CD4-positive, alpha-beta memory T cell (primary cell): ENCODE measurements at regions of chr6 and their contacts with region 1.

Region 1: DNA sequence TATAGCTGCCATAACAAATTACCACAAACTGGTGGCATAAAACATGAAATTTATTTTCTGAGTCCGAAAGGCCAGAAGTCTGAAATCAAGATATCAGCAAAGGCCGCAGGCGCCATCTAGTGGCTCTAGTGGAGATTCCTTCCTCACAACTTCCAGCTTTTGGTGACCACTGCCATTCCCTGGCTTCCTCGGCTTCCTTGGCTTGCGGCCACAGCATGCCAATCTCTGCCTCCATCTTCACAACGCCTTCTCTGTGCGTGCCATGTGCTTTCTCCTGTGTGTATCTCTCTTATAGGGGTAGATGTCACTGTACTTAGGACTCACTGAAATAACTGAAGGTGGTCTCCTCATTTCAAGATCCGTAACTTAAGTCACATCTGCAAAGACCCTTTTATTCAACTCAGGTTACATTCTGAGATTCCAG is 5.4 kb upstream of the PLAGL1 start:
- DNase-seq: peak; percentile 50 to 61 (median 56)
- H3K4me3 ChIP-seq: no peak overlapping the region
- H3K4me3 Mint-ChIP-seq: no peak overlapping the region
- H3K27ac ChIP-seq: no peak overlapping the region
- H3K27ac Mint-ChIP-seq: no peak overlapping the region
- H3K4me1 ChIP-seq: no peaks in the 10 kb centered on the region
- H3K4me1 Mint-ChIP-seq: peaks cover 0 to 2% (median under 1%) of the 10 kb centered on the region in 4 donors
- H3K27me3 ChIP-seq: no peaks in the 10 kb centered on the region
- H3K27me3 Mint-ChIP-seq: peaks cover 1 to 4% of the 10 kb centered on the region in 2 donors

Region 2: GRCh38 chr6:142566628-142567396 is 1446.7 kb before region 1 on chr6:
- CTCF ChIA-PET with region 1: no interaction called
- POLR2A ChIA-PET with region 1: no interaction called
- intact Hi-C with region 1: loop called (anchors 5 kb)
- DNase-seq: peak; percentile 47 to 49 (median 48)
- H3K4me3 ChIP-seq: no peak overlapping the region
- H3K4me3 Mint-ChIP-seq: peak overlapping the region in 2 of 8 donors; percentile 29 to 53
- H3K27ac ChIP-seq: no peak overlapping the region
- H3K27ac Mint-ChIP-seq: peak overlapping the region in 6 of 7 donors; percentile 24 to 64 (median 40)
- H3K4me1 ChIP-seq: peaks cover 52% of the 10 kb centered on the region
- H3K4me1 Mint-ChIP-seq: peaks cover 34 to 59% (median 51%) of the 10 kb centered on the region in 4 donors
- H3K27me3 ChIP-seq: no peaks in the 10 kb centered on the region
- H3K27me3 Mint-ChIP-seq: no peaks in the 10 kb centered on the region

Region 3: DNA sequence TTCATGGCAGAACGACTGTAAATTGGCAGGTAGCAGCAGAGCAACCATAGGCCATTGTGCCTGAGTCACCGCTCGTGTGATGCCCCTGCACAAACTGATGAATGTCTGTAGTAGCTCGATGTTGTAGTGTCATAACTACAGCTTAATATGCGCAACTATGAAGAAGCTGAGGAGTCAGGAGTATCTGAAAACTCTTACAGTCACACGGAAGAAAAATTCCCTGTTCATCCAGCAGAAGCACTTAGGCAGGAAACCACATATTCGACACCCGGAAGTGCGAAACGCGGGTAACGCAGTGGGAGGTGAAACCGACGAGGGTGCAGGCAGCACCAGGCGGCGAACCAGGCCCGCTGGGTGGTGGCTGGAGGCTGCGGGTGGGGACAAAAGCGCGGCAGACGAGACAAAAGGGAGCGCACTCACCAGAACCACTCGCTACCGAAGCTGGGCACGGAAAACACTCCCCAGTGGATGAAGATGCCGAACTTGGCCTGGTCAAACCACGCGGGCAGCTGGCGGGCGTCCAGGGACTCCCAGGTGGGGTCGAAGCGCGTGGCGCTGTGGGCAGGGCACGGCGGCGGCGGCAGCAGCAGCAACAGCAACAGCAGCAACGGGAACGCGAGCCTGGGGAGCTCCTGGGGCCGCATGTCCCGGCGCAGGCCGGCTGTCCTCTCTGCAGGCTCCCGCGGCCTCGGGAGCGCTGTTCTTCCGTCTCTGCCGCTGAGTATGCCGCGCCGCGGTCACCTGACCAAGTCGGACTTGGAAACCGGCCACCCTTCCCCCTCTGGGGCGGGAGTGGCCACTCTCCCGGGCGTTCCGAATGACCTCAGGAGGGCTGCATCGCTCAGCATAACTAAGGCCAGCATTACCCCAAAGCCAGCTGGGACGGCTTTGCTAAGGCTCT is 502.3 kb before region 1 on chr6 and contains the start of gene FUCA2:
- CTCF ChIA-PET with region 1: interaction called, 31 read pairs
- POLR2A ChIA-PET with region 1: interaction called, 3 read pairs
- intact Hi-C with region 1: loop called (anchors 1 kb)
- DNase-seq: peak; percentile 64 to 76 (median 70)
- H3K4me3 ChIP-seq: peak within 1 kb of the TSS; percentile 64 to 78
- H3K4me3 Mint-ChIP-seq: peak within 1 kb of the TSS; percentile 91 to 97 (median 92)
- H3K27ac ChIP-seq: peak within 1 kb of the TSS; percentile 67
- H3K27ac Mint-ChIP-seq: peak within 1 kb of the TSS; percentile 92 to 97 (median 94)
- H3K4me1 ChIP-seq: peaks cover 35% of the 10 kb centered on the region
- H3K4me1 Mint-ChIP-seq: peaks cover 20 to 45% (median 27%) of the 10 kb centered on the region in 4 donors
- H3K27me3 ChIP-seq: no peaks in the 10 kb centered on the region
- H3K27me3 Mint-ChIP-seq: no peaks in the 10 kb centered on the region
- total RNA-seq, gene FUCA2: 10.6 to 11.4 TPM

Region 4: GRCh38 chr6:143940011-143940597 is 73.4 kb before region 1 on chr6:
- CTCF ChIA-PET with region 1: interaction called, 44 read pairs
- POLR2A ChIA-PET with region 1: no interaction called
- intact Hi-C with region 1: loop called (anchors 1 kb)
- DNase-seq: peak; percentile 55 to 66 (median 58)
- H3K4me3 ChIP-seq: no peak overlapping the region
- H3K4me3 Mint-ChIP-seq: no peak overlapping the region
- H3K27ac ChIP-seq: no peak overlapping the region
- H3K27ac Mint-ChIP-seq: no peak overlapping the region
- H3K4me1 ChIP-seq: no peaks in the 10 kb centered on the region
- H3K4me1 Mint-ChIP-seq: peaks cover 4 to 7% (median 6%) of the 10 kb centered on the region in 4 donors
- H3K27me3 ChIP-seq: no peaks in the 10 kb centered on the region
- H3K27me3 Mint-ChIP-seq: peaks cover 4 to 5% of the 10 kb centered on the region in 2 donors

Region 5: DNA sequence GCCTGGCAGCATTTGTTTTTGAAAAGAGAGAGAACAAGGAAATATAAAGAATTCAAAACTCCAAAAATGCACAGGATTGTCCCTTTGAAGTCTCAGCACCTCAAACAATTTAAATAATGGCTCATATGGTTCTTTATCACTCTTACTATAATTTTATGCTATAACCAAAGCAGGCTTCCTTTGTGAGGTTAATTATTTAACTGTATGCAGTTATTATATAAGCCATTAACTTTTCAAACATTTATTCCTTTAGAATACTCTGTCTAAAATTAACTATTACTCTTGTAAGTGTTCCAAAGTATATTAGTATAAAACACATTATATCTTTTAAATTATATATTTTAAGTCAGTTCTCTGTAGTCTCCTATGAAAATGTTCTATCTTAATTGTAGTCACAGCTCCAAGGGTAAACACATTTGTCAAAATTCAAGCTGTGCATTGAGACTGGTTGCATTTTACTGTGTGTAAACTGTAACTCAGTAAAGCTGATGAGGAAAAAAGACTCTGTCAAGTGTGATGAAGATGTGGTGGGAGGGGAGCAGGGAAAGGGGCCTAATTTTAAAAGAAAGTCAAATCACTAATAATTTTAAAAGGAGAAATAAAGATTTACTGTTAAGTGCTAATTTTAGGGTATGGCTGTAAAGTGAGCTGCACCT is 14.6 kb after region 1 on chr6:
- CTCF ChIA-PET with region 1: interaction called, 13 read pairs
- POLR2A ChIA-PET with region 1: no interaction called
- intact Hi-C with region 1: no loop called
- DNase-seq: no peak
- H3K4me3 ChIP-seq: no peak overlapping the region
- H3K4me3 Mint-ChIP-seq: no peak overlapping the region
- H3K27ac ChIP-seq: no peak overlapping the region
- H3K27ac Mint-ChIP-seq: no peak overlapping the region
- H3K4me1 ChIP-seq: no peaks in the 10 kb centered on the region
- H3K4me1 Mint-ChIP-seq: no peaks in the 10 kb centered on the region
- H3K27me3 ChIP-seq: no peaks in the 10 kb centered on the region
- H3K27me3 Mint-ChIP-seq: no peaks in the 10 kb centered on the region

Region 6: GRCh38 chr6:144063744-144064401 is 50.4 kb after region 1 on chr6:
- CTCF ChIA-PET with region 1: no interaction called
- POLR2A ChIA-PET with region 1: no interaction called
- intact Hi-C with region 1: loop called (anchors 10 kb)
- DNase-seq: peak; percentile 90 to 92 (median 91)
- H3K4me3 ChIP-seq: peak overlapping the region; percentile 38 to 91
- H3K4me3 Mint-ChIP-seq: peak overlapping the region; percentile 90 to 95 (median 93)
- H3K27ac ChIP-seq: peak overlapping the region; percentile 88
- H3K27ac Mint-ChIP-seq: peak overlapping the region; percentile 91 to 97 (median 96)
- H3K4me1 ChIP-seq: peaks cover 20% of the 10 kb centered on the region
- H3K4me1 Mint-ChIP-seq: peaks cover 21 to 36% (median 28%) of the 10 kb centered on the region in 4 donors
- H3K27me3 ChIP-seq: no peaks in the 10 kb centered on the region
- H3K27me3 Mint-ChIP-seq: no peaks in the 10 kb centered on the region